Sigmoid colon (tissue), 7 donors: ENCODE measurements at regions of chr3 and their contacts with region 1.

Region 1: GRCh38 chr3:197749601-197750395 is at the start of gene FYTTD1:
- DNase-seq: peak; percentile 95
- H3K4me3 ChIP-seq: peak within 1 kb of the TSS; percentile 56 to 85 (median 77)
- H3K27ac ChIP-seq: peak within 1 kb of the TSS; percentile 89 to 98 (median 95)
- H3K4me1 ChIP-seq: peaks cover 0 to 33% (median 23%) of the 10 kb centered on the region in 4 donors
- H3K27me3 ChIP-seq: no peaks in the 10 kb centered on the region
- CTCF ChIP-seq: peak in 2 of 4 experiments; percentile 43 to 49
- EP300 ChIP-seq: no peak
- POLR2A ChIP-seq: peak; percentile 63 to 65
- total RNA-seq, gene FYTTD1: 46.4 to 63.9 (median 51.8) TPM

Region 2: DNA sequence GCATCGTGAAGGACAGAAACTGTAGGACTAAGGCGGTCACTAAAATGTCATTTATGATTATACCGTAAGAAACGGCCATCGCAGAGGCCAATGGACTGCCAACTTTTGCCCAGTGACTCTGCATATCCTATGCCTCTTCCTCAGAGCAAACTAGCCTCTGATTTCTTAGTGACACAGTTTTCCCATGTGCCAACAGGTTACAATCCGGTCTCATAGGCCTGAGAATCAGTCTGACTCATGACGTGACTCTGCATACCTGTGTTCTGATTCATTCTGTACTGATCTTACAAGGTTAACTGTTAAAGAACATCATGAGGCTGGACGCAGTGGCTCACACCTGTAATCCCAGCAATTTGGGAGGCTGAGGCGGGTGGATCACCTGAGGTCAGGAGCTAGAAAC is 30.9 kb before region 1 on chr3:
- intact Hi-C with region 1: no loop called
- DNase-seq: no peak
- H3K4me3 ChIP-seq: no peak overlapping the region
- H3K27ac ChIP-seq: no peak overlapping the region
- H3K4me1 ChIP-seq: peaks cover 0 to 5% (median under 1%) of the 10 kb centered on the region in 4 donors
- H3K27me3 ChIP-seq: no peaks in the 10 kb centered on the region
- CTCF ChIP-seq: no peak
- EP300 ChIP-seq: no peak
- POLR2A ChIP-seq: no peak

Region 3: DNA sequence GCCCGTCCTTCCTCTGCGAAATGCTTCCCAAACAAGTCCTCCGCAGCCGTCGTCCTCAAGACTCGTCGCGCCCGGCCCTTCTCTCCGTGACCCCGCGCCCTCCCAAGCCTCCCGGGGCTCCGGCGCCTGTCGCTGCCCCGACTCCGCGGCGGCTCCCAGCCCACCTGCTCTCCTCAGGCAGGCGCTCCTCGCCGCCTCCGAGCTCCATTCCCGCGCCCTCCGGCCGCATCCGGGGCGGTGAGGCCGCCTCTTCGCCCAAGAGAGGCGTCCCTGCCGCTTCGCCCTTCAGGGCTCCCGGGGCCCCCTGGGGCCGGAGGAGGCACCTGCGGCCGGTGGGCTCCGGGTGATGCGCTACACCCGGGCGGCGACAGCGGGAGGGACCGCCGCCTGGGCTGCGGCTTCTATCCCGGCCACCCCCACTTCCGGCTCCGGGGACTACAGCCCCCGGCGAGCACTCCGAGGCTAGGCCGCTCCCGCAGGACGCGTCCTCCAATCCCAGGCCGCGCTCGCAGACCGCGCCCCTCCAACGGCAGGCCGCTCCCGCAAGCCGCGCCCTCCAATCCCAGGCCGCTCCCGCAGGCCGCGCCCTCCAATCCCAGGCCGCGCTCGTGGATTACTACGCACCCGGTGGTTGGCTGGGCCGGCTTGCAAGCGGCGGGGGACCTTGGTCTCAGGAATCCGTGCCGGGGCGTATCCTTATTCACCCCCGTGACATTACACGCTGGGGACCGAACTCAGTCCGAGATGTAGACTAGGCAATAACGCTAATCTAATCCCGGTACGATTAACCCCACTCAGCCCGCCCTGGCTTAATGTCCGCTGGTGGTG is 13.1 kb before region 1 on chr3 and contains the start of gene RUBCN:
- intact Hi-C with region 1: loop called (anchors 1 kb)
- DNase-seq: peak; percentile 97
- H3K4me3 ChIP-seq: peak within 1 kb of the TSS; percentile 84 to 98 (median 96)
- H3K27ac ChIP-seq: peak within 1 kb of the TSS; percentile 86 to 95 (median 92)
- H3K4me1 ChIP-seq: peaks cover 0 to 22% (median 22%) of the 10 kb centered on the region in 4 donors
- H3K27me3 ChIP-seq: no peaks in the 10 kb centered on the region
- CTCF ChIP-seq: no peak
- EP300 ChIP-seq: no peak
- POLR2A ChIP-seq: peak; percentile 57 to 72
- total RNA-seq, gene RUBCN: 35.2 to 41.8 (median 36.6) TPM

Region 4: GRCh38 chr3:197791113-197791891 is 41.5 kb after region 1 on chr3 and contains the start of gene LRCH3:
- intact Hi-C with region 1: loop called (anchors 1 kb)
- DNase-seq: peak; percentile 85
- H3K4me3 ChIP-seq: peak within 1 kb of the TSS; percentile 87 to 94 (median 92)
- H3K27ac ChIP-seq: peak within 1 kb of the TSS; percentile 96
- H3K4me1 ChIP-seq: peaks cover 0 to 32% (median 26%) of the 10 kb centered on the region in 4 donors
- H3K27me3 ChIP-seq: no peaks in the 10 kb centered on the region
- CTCF ChIP-seq: no peak
- EP300 ChIP-seq: no peak
- POLR2A ChIP-seq: peak in 1 of 2 donors; percentile 49
- total RNA-seq, gene LRCH3: 44.7 to 154 (median 49.4) TPM

Region 5: GRCh38 chr3:197847866-197848401 is 98.1 kb after region 1 on chr3:
- intact Hi-C with region 1: loop called (anchors 5 kb)
- DNase-seq: no peak
- H3K4me3 ChIP-seq: peak overlapping the region; percentile 8 to 44 (median 38)
- H3K27ac ChIP-seq: peak overlapping the region in 3 of 4 donors; percentile 72 to 81 (median 72)
- H3K4me1 ChIP-seq: peaks cover 0 to 8% (median 5%) of the 10 kb centered on the region in 4 donors
- H3K27me3 ChIP-seq: no peaks in the 10 kb centered on the region
- CTCF ChIP-seq: no peak
- EP300 ChIP-seq: no peak
- POLR2A ChIP-seq: no peak